ENCODE measurements at regions of chr1 and their contacts with region 1.

Region 1: GRCh38 chr1:161824618-161825017 is 58.5 kb downstream of the ATF6 start:
- DNase-seq: no peak
- ATAC-seq: no peak
- H3K4me3 ChIP-seq: no peak overlapping the region
- H3K27ac ChIP-seq: no peak overlapping the region
- H3K4me1 ChIP-seq: peaks cover 10% of the 10 kb centered on the region
- H3K27me3 ChIP-seq: no peaks in the 10 kb centered on the region
- CTCF ChIP-seq: no peak

Region 2: GRCh38 chr1:161855260-161855659 is 30.6 kb after region 1 on chr1:
- intact Hi-C with region 1: loop called in 1 of 2 experiments (anchors 5 kb)
- DNase-seq: no peak
- ATAC-seq: no peak
- H3K4me3 ChIP-seq: no peak overlapping the region
- H3K27ac ChIP-seq: no peak overlapping the region
- H3K4me1 ChIP-seq: no peaks in the 10 kb centered on the region
- H3K27me3 ChIP-seq: no peaks in the 10 kb centered on the region
- CTCF ChIP-seq: no peak

Measured in psoas muscle (tissue), 8 donors.